ENCODE measurements at regions of chr11 and their contacts with region 1.

Region 1: DNA sequence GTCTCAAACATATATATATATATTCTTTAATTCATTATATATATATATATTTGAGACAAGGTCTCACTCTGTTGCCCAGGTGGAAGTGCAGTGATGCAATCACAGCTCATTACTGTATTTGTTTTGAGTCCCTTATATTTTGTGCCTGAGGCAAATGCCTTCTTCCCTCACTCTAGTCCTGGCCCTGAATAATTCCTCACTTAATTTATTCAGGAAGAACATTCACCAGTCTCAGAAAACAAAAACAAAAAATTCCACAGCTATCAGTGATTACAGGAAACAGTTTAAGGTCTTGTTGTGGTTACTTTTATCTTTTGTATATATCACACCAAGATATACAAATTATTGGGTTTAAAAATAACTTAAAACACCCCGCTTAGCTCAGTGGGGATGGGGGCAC is 155.7 kb downstream of the CWF19L2 start:
- DNase-seq: no peak
- ATAC-seq: no peak
- H3K4me3 Mint-ChIP-seq: no peak overlapping the region
- H3K27ac Mint-ChIP-seq: no peak overlapping the region
- H3K4me1 Mint-ChIP-seq: no peaks in the 10 kb centered on the region
- H3K27me3 Mint-ChIP-seq: no peaks in the 10 kb centered on the region

Region 2: DNA sequence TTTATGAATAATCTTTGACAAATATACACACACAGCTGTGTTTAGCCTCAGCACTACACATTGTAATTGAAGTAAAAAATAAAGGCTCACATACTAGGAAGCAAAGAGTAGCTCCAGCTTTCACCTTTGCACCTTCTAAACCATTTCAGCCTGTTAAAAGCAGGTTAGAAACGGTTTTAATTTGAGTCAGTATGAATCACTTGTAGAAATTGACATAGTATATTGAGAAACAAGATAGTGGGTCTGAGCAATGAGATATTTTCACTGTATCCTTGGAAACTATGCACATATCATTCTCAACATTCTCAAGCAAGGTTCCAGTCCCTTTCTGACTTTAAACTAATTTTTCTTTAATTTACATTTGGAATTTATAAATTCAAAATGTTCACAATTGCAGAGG is 844.2 kb before region 1 on chr11:
- CTCF ChIA-PET with region 1: no interaction called
- POLR2A ChIA-PET with region 1: no interaction called
- intact Hi-C with region 1: no loop called
- DNase-seq: no peak
- ATAC-seq: no peak
- H3K4me3 Mint-ChIP-seq: no peak overlapping the region
- H3K27ac Mint-ChIP-seq: no peak overlapping the region
- H3K4me1 Mint-ChIP-seq: no peaks in the 10 kb centered on the region
- H3K27me3 Mint-ChIP-seq: no peaks in the 10 kb centered on the region

Region 3: DNA sequence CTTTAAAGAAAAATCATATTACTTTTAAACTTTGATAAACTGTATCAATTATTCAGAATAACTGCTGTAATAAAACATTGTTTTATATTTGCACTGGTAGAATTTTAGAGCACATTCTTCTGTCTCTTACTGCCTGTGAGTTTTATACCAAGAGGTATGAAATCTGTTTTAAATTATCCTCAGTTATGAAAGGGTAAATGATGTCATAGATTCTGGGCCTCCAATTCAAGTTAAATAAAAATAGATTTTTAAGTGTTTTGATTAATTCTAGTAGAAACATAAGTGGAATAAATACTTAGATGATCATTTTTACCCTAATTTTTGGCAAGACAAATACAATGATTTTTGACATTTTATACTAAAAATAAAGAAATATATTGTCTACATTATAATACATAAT is 376.6 kb before region 1 on chr11:
- CTCF ChIA-PET with region 1: no interaction called
- POLR2A ChIA-PET with region 1: no interaction called
- intact Hi-C with region 1: no loop called
- DNase-seq: no peak
- ATAC-seq: no peak
- H3K4me3 Mint-ChIP-seq: no peak overlapping the region
- H3K27ac Mint-ChIP-seq: no peak overlapping the region
- H3K4me1 Mint-ChIP-seq: no peaks in the 10 kb centered on the region
- H3K27me3 Mint-ChIP-seq: no peaks in the 10 kb centered on the region

Region 4: DNA sequence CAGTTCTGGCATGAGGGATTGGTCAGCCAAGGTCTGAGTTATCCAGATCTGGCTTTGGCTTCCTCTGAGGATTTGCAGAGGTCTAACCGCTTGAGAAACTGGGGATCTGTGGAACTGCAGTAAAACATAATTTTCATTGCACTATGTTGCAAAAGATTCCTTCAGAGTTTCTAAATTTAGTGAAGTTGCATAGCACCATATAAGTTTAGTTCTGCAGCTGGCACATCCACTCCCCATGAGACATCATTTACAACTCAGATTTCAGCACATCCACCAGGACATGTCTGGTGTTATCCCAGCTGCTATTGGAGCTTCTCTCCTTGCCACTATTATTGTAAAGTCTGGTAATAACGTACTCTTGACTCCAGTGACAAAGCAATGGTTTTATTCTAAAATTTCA is 25.8 kb before region 1 on chr11:
- CTCF ChIA-PET with region 1: no interaction called
- POLR2A ChIA-PET with region 1: no interaction called
- intact Hi-C with region 1: loop called in 1 of 2 experiments (anchors 1 kb)
- DNase-seq: no peak
- ATAC-seq: no peak
- H3K4me3 Mint-ChIP-seq: no peak overlapping the region
- H3K27ac Mint-ChIP-seq: no peak overlapping the region
- H3K4me1 Mint-ChIP-seq: no peaks in the 10 kb centered on the region
- H3K27me3 Mint-ChIP-seq: no peaks in the 10 kb centered on the region

Measured in activated CD4-positive, alpha-beta T cell treated with anti-CD3 and anti-CD28 coated beads for 36 hours (primary cell).